ENCODE measurements at regions of chr4 and their contacts with region 1.

Region 1: GRCh38 chr4:183471946-183472708 is 27.7 kb downstream of the CDKN2AIP start:
- DNase-seq: peak; percentile 75 to 84 (median 78)
- ATAC-seq: peak; percentile 99
- H3K4me3 ChIP-seq: no peak overlapping the region
- H3K27ac ChIP-seq: no peak overlapping the region
- H3K4me1 ChIP-seq: no peaks in the 10 kb centered on the region
- H3K27me3 ChIP-seq: no peaks in the 10 kb centered on the region
- CTCF ChIP-seq: peak; percentile 66 to 85 (median 83)
- EP300 ChIP-seq: no peak
- POLR2A ChIP-seq: no peak
- RAD21 ChIP-seq: peak; percentile 84

Region 2: GRCh38 chr4:183541010-183541751 is 69.1 kb after region 1 on chr4:
- CTCF ChIA-PET with region 1: no interaction called
- POLR2A ChIA-PET with region 1: no interaction called
- in situ Hi-C with region 1: no loop called
- intact Hi-C with region 1: no loop called
- DNase-seq: peak in 1 of 4 experiments; percentile 23
- ATAC-seq: peak; percentile 39
- H3K4me3 ChIP-seq: no peak overlapping the region
- H3K27ac ChIP-seq: no peak overlapping the region
- H3K4me1 ChIP-seq: no peaks in the 10 kb centered on the region; a peak in 1 of 5 replicates
- H3K27me3 ChIP-seq: peaks cover 3 to 24% of the 10 kb centered on the region in 2 experiments
- CTCF ChIP-seq: no peak
- EP300 ChIP-seq: no peak
- POLR2A ChIP-seq: no peak
- RAD21 ChIP-seq: no peak

Region 3: GRCh38 chr4:183602557-183603027 is 130.5 kb after region 1 on chr4:
- CTCF ChIA-PET with region 1: interaction called, 7 read pairs
- POLR2A ChIA-PET with region 1: no interaction called
- in situ Hi-C with region 1: loop called (anchors 10 kb)
- intact Hi-C with region 1: loop called (anchors 1 kb)
- DNase-seq: peak in 1 of 4 experiments; percentile 28
- ATAC-seq: 0 out of 3 replicates have a peak, but pooled peaks have one; percentile 41
- H3K4me3 ChIP-seq: no peak overlapping the region
- H3K27ac ChIP-seq: no peak overlapping the region
- H3K4me1 ChIP-seq: no peaks in the 10 kb centered on the region; a peak in 1 of 5 replicates
- H3K27me3 ChIP-seq: peaks cover 2 to 15% of the 10 kb centered on the region in 2 experiments; a peak in 3 of 5 replicates
- CTCF ChIP-seq: peak; percentile 26 to 55 (median 27); a peak in 3 of 6 replicates
- EP300 ChIP-seq: no peak
- POLR2A ChIP-seq: no peak
- RAD21 ChIP-seq: peak; percentile 53 to 58

Region 4: GRCh38 chr4:183840311-183840710 is 368.2 kb after region 1 on chr4:
- CTCF ChIA-PET with region 1: no interaction called
- POLR2A ChIA-PET with region 1: no interaction called
- in situ Hi-C with region 1: no loop called
- intact Hi-C with region 1: loop called (anchors 10 kb)
- DNase-seq: peak; percentile 62 to 78 (median 65)
- ATAC-seq: peak; percentile 93
- H3K4me3 ChIP-seq: no peak overlapping the region
- H3K27ac ChIP-seq: no peak overlapping the region
- H3K4me1 ChIP-seq: no peaks in the 10 kb centered on the region
- H3K27me3 ChIP-seq: peaks cover 0 to 5% of the 10 kb centered on the region in 2 experiments; a peak in 2 of 5 replicates
- CTCF ChIP-seq: peak; percentile 81 to 88 (median 82)
- EP300 ChIP-seq: no peak
- POLR2A ChIP-seq: no peak
- RAD21 ChIP-seq: peak; percentile 90 to 91

Region 5: GRCh38 chr4:184100297-184100885 is 628.3 kb after region 1 on chr4:
- CTCF ChIA-PET with region 1: no interaction called
- POLR2A ChIA-PET with region 1: no interaction called
- in situ Hi-C with region 1: no loop called
- intact Hi-C with region 1: loop called (anchors 10 kb)
- DNase-seq: peak; percentile 57 to 74 (median 71)
- ATAC-seq: peak; percentile 95
- H3K4me3 ChIP-seq: no peak overlapping the region
- H3K27ac ChIP-seq: no peak overlapping the region
- H3K4me1 ChIP-seq: peaks cover 0 to 5% of the 10 kb centered on the region in 2 experiments; a peak in 2 of 5 replicates
- H3K27me3 ChIP-seq: peaks cover 2 to 54% of the 10 kb centered on the region in 2 experiments
- CTCF ChIP-seq: peak; percentile 82 to 88 (median 87)
- EP300 ChIP-seq: no peak
- POLR2A ChIP-seq: no peak
- RAD21 ChIP-seq: peak; percentile 78 to 79